ENCODE measurements at regions of chr7 and their contacts with region 1.

Region 1: GRCh38 chr7:80392229-80393169 is 119.4 kb downstream of the GNAT3 start:
- DNase-seq: no peak
- H3K4me3 ChIP-seq: no peak overlapping the region
- H3K27ac ChIP-seq: no peak overlapping the region
- H3K4me1 ChIP-seq: peaks cover 0 to 5% (median 2%) of the 10 kb centered on the region in 4 donors
- H3K27me3 ChIP-seq: no peaks in the 10 kb centered on the region
- CTCF ChIP-seq: peak; percentile 57 to 73 (median 65)
- EP300 ChIP-seq: no peak
- POLR2A ChIP-seq: no peak

Region 2: GRCh38 chr7:80206763-80207162 is 185.7 kb before region 1 on chr7:
- intact Hi-C with region 1: loop called (anchors 10 kb)
- DNase-seq: no peak
- H3K4me3 ChIP-seq: no peak overlapping the region
- H3K27ac ChIP-seq: no peak overlapping the region
- H3K4me1 ChIP-seq: peaks cover 0 to 25% (median 12%) of the 10 kb centered on the region in 4 donors
- H3K27me3 ChIP-seq: no peaks in the 10 kb centered on the region
- CTCF ChIP-seq: no peak
- EP300 ChIP-seq: no peak
- POLR2A ChIP-seq: no peak

Measured in esophagus muscularis mucosa (tissue), 4 donors.